GM18951 (cell line): ENCODE measurements at regions of chr17 and their contacts with region 1.

Region 1: GRCh38 chr17:41278176-41278955 is 2.9 kb downstream of the KRTAP9-7 start:
- POLR2A ChIP-seq: no peak

Region 2: DNA sequence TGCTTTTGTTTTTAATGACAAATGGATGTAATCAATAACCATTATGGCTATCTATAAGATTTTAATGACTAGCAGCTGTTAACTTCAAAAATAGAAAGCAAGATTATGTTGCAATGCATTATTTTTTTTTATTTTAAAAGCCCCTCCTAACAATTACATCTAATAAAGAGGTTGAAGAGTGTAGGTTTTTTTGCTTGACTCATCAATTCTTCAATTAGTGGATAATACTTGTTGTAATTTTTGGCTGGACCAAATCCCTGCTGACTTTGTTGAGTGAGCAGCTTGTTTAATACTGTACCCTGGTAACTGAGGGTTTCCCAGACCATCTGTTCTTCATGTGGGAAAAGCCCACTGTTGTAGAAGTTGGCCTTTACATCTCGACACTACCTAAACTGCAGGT is 547.4 kb before region 1 on chr17:
- in situ Hi-C with region 1: loop called (anchors 5 kb)
- POLR2A ChIP-seq: no peak